AG04449 (cell line): ENCODE measurements at regions of chr9 and their contacts with region 1.

Region 1: DNA sequence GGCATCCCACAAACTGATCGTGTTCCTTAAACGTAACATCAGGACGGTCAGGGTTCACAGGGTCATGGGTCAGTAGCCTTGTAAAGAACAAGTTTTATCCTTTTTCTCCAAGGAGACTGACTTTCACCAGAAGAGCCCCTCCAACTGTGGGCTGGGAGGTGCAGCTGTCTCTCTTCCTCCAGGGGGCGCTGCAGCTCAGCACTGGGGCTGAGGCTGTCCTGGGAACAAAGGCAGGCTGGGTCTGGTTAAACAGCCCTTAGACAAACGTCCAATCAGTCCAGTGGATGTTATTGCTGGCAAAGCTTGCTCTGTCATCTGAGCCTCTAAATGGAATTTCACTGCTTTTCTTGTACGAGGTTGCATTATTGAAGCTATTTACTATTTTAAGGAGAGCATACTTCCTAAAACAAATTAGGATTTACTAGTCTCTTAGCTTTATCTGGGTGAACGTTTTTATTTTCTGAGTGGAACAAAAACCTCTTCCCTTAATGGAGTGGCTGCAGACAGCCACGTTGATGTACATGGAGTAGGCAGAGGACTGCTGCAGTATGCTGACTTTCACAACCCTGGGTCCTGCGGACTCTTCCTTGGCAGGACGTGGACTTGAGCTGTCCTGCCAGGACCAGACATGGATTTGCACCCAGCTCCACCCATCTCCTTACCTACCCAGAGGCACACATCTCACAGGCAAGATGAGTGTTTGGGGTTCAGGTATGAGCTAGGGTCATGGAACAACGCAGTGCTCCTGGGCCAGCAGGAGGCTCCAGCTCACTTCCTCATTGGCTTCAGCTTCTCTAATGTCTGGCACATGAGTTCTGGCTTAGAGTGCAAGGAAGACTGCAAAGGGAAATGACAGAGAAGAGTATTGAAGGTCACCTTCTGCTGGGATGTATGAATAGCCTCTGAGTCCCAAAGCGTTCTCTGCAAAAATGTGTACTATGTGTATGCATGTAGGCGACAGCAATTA is 7.8 kb downstream of the EXOSC2 start:
- DNase-seq: peak; percentile 57
- H3K4me3 ChIP-seq: no peak overlapping the region
- CTCF ChIP-seq: peak; percentile 95

Region 2: GRCh38 chr9:130629443-130630090 is 71.8 kb before region 1 on chr9:
- CTCF ChIA-PET with region 1: no interaction called
- POLR2A ChIA-PET with region 1: no interaction called
- DNase-seq: no peak
- H3K4me3 ChIP-seq: no peak overlapping the region
- CTCF ChIP-seq: no peak

Region 3: DNA sequence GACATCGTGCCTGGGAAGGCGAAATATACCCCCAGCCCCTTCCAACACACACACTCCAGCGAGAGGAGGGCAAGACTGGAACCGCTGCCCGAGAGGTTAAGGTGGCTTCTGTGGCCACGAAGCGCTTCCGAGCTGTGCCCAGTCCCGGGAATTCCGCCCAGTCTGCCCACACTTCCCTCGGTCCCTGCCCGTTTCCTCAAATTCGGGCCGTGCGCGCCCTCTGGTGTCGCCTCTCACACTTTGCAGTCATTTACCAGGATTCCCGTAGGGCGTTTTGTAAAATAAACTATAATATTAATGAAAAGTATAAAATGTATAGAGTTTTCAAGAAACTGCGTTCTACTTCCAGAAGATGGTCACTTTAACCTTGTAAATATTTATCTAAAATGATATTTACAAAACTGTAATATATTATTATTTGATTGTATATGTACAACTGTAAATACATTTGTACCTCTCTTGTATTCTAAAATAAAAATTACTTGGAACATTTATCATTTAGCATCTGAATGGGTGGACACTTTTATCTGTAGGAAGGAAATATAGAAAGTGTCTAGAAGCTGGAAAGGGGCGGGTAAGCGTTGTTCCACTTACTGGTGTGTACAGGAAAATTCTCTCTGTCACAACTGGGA is 18.7 kb before region 1 on chr9:
- CTCF ChIA-PET with region 1: interaction called, 21 read pairs
- POLR2A ChIA-PET with region 1: no interaction called
- DNase-seq: no peak
- H3K4me3 ChIP-seq: peak overlapping the region; percentile 39
- CTCF ChIP-seq: peak; percentile 77

Region 4: DNA sequence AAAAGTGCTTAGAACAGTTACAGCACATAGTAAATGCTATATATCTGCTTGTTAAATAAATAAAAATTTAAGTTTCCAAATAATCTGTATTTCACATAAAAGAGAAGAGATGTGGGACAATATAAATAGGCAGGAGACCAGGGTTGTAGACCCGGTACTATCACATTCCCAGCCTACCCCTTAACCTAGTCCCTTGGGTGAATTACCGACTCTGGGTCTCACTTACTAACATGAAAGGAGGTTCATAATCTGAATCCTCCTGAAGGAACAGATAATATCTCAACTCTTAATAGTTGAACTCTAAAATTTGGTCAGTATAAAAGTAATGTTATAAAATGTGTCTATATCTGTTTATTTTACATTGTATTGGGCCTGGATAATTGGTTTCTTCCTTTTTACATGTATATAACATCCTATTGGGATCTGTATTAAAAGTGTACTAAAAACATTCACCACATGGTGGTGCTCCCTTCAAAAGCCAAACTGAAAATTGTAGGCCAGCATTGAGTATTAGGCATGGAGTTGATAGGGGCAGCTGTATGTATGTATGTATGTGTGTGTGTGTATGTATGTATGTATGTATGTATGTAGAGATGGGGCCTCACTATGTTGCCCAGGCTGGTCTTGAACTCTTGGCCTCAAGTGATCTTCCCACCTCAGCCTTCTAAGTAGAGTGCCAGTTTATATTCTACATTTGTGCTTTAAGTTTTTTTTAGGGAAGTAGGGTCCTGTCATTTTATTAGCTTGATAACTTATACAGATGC is 69.5 kb after region 1 on chr9:
- CTCF ChIA-PET with region 1: interaction called, 20 read pairs
- POLR2A ChIA-PET with region 1: interaction called, 3 read pairs
- DNase-seq: peak; percentile 37
- H3K4me3 ChIP-seq: no peak overlapping the region
- CTCF ChIP-seq: peak; percentile 41

Region 5: DNA sequence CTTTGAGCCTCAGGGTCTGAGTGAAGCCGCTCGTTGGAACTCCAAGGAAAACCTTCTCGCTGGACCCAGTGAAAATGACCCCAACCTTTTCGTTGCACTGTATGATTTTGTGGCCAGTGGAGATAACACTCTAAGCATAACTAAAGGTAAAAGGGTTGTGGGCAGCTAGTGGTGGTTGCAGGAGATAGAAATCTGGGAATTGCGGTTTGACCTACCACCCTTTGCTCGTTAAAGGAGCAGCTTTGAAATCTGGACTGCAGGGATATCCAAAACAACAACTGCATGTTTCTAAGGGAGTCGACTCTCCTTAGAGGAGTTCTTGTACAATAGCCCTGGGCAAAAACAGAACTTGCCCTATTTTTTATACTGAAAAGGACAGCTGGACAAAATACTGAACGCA is 152.8 kb after region 1 on chr9:
- CTCF ChIA-PET with region 1: interaction called, 18 read pairs
- POLR2A ChIA-PET with region 1: no interaction called
- DNase-seq: no peak
- H3K4me3 ChIP-seq: no peak overlapping the region
- CTCF ChIP-seq: no peak

Region 6: DNA sequence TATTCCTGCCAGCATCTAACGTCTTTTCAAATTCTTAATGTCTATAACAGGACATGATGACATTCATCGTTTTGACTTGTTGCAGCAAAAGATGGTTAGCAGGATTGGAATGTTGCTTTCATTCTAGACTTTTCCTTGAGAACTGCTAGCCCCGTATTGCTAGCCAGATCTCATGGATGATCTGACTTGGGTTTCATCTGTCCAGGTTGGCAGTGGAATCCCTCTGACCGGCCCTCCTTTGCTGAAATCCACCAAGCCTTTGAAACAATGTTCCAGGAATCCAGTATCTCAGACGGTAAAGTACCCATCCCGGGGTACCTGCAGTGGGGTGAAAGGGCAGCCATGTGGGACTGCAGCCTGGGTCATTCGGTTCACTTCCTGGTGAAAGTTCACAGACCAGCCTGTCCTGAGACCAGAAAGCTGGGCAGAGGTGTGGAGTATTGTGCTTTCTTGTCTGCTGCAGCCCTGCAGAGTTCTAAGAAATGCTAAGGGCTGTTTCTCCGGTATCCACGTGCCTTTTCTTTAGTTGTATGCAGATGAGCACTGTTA is 178.6 kb after region 1 on chr9:
- CTCF ChIA-PET with region 1: interaction called, 10 read pairs
- POLR2A ChIA-PET with region 1: no interaction called
- DNase-seq: no peak
- H3K4me3 ChIP-seq: no peak overlapping the region
- CTCF ChIP-seq: no peak

Region 7: DNA sequence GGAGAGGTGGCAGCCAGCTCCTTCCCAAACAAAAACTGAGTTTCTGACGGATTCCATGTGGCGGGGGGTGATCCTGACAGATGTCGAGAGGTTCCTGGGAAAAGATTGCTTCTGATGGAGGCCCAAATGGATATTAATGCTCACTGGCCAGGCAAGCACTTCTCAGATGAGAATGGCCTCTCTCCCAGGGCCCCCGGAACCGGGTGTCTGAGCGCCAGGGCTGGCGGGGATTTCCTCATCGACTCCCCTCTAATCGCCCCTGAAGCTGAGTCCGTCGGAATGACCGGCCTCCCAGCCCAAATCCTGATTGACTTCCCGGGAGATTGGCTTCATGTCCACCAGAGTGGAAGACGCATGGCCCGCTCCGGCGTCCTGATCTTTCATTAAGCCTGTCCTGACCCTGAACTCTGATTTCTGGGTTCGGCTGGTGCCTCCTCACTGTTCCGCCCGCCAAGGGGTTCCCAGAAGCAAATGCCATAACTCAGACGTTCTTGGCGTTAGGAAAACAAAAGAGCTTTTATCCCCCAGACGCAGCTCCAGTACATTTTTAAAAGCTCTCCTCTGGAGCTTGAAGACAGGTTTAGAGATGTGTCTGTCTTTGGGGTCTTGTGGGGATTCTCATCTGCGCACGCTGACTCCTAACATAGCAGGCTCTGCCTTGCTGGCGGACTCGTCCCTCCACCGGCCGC is 220.1 kb after region 1 on chr9:
- CTCF ChIA-PET with region 1: no interaction called
- POLR2A ChIA-PET with region 1: no interaction called
- DNase-seq: no peak
- H3K4me3 ChIP-seq: no peak overlapping the region
- CTCF ChIP-seq: no peak

Region 8: DNA sequence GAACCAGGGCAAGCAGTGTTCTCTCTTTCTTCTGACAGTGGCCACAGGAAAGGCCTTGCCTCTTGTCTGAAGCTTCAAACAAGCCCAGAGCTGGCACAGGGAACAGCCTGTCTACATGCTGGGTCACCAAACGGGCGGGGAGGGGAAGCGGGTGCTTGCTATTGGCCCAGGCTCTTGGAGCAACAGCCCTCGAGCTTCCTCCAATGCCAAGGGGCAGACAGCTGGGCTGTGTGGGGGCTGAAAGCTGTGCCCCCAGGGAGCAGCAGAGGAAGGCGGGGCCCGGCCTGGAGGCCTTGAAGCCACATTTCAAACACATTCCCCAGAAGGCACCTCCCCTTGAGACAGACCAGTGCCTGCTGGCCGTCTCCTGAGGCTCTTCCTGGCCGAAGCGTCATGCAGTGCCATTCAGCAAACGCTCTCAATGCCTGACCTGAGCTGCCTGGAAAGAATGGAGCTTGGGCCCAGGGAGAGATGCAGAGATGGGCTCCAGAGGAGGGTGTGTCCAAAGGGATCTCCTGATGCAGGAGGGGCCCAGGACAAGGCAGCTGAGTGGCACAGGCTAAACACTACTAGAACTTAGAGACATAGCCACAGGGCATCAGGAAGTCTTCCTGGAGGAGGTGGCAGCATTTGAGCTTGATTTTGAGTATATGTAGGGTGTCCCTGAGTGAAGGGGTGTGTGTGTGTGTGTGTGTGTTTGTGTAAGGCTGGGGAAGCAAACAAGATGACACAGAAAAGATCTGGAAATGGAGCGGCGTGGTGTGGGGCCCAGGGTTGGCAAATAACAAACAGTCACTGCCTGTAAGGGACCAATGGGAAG is 235.2 kb after region 1 on chr9:
- CTCF ChIA-PET with region 1: interaction called, 21 read pairs
- POLR2A ChIA-PET with region 1: no interaction called
- DNase-seq: peak; percentile 34
- H3K4me3 ChIP-seq: no peak overlapping the region
- CTCF ChIP-seq: no peak